ENCODE measurements at regions of chr5 and their contacts with region 1.

Region 1: DNA sequence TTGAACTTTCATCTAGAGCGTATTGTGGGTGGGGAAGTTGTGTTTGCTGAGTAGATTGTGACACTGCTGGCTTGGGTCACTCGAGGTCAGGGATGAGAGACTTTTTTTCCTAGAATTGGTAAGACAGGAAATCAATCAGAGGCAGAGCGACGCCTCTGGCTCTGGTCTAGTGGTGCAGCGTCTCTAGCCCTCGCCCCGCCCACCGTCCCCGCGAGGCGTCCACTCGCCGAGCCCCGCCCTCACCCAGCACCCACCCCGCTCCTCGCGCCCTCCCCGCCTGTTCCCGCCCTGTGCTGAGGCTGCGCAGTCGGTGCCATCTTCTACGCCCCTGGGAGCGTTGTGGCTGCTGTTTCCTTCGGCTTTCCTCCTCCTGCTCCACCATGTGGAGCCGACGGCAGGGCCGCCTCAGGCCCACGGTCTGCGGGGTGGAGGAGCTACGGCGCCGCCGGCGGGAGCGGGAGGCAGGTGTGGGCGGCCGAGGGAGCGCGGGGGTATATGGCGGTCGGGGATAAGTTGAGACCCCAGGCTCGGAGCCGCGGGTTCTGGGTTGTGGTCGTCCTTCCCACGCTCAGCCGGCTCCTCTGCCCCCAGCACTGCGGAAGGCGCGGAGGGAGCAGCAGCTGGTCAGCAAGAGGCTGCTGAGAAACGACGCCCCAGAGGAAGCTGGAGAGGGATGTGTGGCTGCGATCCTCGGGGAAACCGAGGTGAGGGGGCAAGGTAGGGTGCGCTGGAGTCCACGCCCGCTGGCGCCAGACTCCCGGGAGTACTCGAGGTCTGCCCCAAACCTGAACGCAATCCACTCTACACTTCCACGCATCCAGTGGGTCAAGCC is at the start of gene TMCO6:
- DNase-seq: peak; percentile 99
- ATAC-seq: peak; percentile 99
- total RNA-seq, gene TMCO6: 4.2 TPM

Region 2: GRCh38 chr5:140509898-140510297 is 129.5 kb before region 1 on chr5:
- intact Hi-C with region 1: no loop called
- DNase-seq: no peak
- ATAC-seq: no peak

Region 3: DNA sequence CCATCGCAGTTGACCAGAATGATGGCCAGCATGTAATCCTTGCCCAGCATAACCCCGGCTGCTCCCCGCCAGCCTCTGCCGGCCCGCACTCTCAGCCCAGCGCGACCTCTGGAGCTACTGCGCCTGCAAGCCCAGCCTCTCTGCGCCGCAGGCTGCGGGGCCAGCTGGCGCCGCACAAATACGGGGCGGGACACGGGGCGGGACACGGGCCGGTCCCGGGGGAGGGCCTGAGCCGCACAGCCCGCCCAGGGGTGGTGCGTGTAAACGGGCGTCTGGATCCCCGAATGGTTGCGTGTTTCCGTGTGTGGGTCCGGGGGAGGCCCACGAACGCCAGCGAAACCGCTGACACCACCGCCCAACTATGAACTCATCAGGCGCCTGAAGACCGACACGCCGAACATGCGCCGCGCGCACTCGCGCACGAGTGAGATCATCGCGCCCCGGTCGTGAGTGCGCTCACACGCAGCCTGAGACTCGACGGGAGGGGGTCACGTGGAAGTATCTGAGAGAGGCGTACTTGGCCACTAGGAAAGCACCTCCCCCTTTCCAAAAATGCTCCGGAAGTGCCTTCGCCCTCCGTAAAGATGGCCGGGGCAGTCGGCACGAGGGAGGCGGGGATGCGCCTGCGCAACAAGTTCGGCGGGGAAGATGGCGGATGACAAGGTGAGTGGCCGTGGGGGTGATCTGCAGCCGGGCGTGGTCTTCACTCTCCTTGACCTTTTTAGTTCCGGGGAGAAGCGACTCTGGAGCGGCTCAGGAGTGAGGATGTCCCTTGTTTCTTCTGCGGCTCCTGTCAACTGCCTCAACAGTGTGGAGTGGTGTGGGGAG is 75.0 kb before region 1 on chr5 and contains the starts of genes APBB3 and SLC35A4:
- intact Hi-C with region 1: loop called (anchors 1 kb)
- DNase-seq: peak; percentile 98
- ATAC-seq: peak; percentile 96
- total RNA-seq, gene APBB3: 10.6 TPM
- total RNA-seq, gene SLC35A4: 76.4 TPM

Region 4: DNA sequence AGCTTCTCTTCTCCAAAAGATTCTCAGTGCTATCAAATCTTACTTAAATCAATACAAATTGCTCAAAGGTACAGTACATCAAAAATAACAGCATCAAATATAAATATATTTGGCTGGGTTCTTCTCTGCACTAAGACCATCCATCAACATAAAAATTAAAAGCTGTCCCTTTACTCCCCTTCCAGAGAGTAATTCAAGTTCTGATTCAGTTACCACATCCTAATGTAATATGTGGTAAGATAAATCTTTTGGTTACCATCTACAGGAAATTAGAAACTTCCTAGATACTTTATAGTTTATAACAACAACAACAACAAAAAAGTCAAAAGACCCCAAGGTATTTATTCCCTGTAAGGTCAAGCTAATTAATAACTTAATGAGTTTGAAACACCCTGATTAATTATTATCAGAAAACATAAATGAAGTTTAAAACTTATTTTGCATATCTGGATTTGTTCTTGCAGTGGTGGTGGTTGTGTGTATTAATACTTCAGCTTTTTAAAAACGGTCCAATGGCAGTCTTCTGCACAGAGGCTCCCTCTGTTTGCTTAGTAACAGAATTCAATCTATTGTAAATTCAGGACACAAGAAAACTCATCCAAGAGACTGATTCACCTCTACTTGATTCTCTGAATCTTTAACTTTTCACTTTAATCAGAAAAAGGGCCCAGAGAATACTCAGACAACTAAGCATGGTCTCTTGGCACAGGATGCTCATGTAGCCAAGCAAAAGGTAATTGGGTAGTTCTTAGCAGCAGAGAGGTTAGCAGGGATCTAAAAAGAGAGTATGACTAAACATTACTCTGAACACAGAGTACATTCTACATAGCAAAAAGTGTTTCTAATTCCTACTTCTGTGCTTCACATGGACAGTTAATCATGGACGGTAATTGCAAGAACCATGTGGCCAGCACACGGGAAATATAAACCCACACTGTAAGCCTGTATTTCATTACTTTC is 959.3 kb after region 1 on chr5:
- intact Hi-C with region 1: no loop called
- DNase-seq: no peak
- ATAC-seq: peak; percentile 78

Region 5: DNA sequence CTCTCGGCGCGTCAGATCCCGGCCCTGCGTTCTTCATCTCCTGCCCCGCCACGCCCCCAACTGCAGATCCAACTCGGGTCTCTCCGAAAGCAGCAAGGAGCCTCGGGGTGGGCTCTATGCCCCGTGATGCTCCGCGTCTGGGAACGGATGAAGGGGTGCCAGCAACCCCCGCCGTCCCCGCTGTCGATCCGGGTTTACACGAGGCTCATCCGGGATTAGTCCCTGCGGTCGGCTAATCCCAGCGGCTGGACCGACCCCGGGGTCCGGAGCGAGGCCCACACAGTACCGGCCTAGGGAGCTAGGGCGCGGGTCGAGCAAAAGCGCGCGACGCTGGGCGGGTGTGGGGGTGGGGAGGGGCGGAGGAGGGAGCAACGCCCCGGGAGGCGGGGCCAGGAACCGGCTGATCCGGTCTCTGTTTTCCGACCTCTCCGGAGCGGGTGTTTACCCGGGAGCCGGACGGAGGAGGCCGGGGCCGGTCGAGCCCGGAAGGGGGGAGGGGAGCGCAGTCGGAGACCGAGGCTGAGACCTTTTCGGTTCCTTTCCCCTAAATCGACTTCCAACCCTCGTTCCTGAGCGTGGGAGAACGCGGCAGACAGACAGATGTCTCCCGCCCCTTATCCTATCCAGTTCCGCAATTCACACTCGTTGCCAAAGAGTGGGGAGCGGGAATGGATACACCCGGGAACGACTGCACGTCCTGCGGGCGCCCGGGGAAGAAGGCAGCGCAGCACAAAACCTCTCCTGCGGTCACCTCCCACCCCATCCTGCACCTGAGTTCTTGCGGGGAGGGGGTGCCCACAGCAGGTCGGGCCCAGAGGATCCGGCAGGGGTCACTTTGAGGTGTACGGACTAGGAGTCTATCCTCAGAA is 1210.2 kb after region 1 on chr5:
- intact Hi-C with region 1: no loop called
- DNase-seq: peak; percentile 89
- ATAC-seq: peak; percentile 92